Activated CD8-positive, alpha-beta T cell treated with anti-CD3 and anti-CD28 coated beads, Interleukin-2, amount 10 ng/mL, durations not matched to agents 7 days and 5 days (primary cell): ENCODE measurements at regions of chr3 and their contacts with region 1.

Region 1: GRCh38 chr3:5194341-5195159 is 7.0 kb downstream of the EDEM1 start:
- DNase-seq: peak; percentile 70
- ATAC-seq: peak; percentile 70
- H3K4me3 Mint-ChIP-seq: peak overlapping the region; percentile 2
- H3K27ac Mint-ChIP-seq: peak overlapping the region; percentile 71
- H3K4me1 Mint-ChIP-seq: peaks cover 86% of the 10 kb centered on the region
- H3K27me3 Mint-ChIP-seq: no peaks in the 10 kb centered on the region

Region 2: DNA sequence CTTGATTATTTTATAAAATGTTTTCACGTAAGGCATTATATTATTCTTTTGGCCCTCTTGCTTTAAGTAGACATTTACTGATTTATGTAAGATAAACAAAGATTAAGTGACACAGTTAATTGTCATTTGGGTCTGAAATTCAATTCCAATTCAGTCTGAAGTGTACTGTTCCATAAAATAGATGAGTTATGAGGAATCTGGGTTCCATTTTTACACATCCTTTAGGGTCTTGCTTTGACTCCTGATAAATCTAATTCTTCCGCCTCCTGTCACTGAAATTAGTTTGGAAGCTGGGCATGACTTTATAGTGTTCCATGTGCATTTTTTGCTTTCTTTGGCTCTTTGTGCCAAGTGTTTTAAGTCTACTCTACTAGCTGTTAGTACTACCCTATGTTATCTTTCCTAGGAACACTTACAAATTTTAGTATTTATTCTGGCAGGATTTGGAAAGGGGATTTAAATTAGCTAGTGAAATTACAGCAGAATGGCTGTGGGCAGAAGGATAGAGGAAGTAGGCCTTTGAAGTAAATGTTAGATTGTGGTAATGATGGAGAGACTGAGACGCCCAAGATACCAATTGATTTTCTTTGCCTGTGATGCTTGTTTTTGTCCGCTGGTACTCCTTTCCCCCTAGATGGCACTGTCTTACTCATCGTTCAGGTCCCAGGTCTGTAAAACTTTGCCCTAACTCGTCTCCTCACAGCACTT is 58.2 kb before region 1 on chr3:
- CTCF ChIA-PET with region 1: interaction called, 10 read pairs
- POLR2A ChIA-PET with region 1: no interaction called
- DNase-seq: peak; percentile 57
- ATAC-seq: peak; percentile 95
- H3K4me3 Mint-ChIP-seq: no peak overlapping the region
- H3K27ac Mint-ChIP-seq: peak overlapping the region; percentile 58
- H3K4me1 Mint-ChIP-seq: peaks cover 41% of the 10 kb centered on the region
- H3K27me3 Mint-ChIP-seq: no peaks in the 10 kb centered on the region